Activated CD4-positive, alpha-beta memory T cell treated with anti-CD3 and anti-CD28 coated beads for 36 hours (primary cell): ENCODE measurements at regions of chr2 and their contacts with region 1.

Region 1: DNA sequence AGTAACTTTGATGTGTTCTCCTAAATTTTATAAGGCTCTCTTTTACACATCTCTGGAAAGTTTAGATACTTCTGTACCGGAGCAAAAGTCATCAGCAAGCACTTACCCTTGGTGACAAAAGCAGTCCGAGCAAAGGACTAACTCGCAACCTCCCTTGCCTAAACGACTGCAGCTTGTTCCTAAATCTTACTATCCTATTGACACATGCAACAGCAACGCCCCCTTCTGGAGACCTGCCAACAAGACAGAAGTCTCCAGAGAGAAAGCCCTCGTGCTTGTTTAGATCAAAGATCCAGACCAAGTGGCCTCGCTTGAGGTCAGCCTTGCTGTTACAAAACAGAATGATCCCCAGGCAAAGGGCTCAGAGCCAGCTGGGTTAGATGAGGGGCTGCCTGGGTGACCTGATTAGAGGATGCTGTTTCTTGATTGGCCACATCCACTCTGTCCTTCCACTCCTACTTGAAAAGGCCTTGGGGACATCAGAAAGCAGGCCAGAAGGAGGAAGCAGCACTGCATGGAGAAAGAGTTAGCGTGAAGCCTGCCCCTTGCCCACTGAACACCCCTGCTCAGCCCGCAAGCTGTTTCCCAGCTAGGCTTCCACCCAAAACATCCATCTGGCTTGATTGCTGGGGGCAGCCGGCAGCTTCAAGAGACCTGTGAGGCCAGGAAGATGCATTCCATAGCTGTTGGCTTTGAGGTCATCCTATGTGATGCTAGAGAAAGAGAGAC is 94.3 kb downstream of the HNRNPLL start:
- DNase-seq: peak; percentile 89
- H3K4me3 Mint-ChIP-seq: no peak overlapping the region
- H3K27ac Mint-ChIP-seq: no peak overlapping the region
- H3K4me1 Mint-ChIP-seq: no peaks in the 10 kb centered on the region
- H3K27me3 Mint-ChIP-seq: peaks cover 2% of the 10 kb centered on the region

Region 2: DNA sequence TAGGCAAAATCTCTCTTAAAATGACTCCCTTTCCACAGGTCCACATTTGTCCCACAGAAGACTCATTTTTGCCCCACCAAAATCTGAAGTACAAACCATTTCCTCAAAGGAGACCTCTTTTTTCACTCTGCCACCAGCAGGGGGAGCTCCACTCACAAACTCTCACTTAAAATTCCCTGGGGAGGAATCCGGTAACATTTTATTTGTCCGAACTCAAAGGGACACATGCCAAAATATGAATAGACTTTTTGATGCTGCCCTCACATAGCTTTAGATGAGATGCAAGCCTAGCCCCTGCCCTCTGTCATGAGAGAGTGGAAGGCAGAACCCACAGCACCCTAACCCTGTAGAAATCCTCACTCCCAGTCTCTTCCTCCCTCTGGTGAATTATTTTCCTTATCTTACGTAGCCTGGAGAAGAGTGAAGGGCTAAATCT is 526.3 kb before region 1 on chr2:
- CTCF ChIA-PET with region 1: interaction called, 4 read pairs
- POLR2A ChIA-PET with region 1: no interaction called
- intact Hi-C with region 1: loop called (anchors 5 kb)
- DNase-seq: peak; percentile 68
- H3K4me3 Mint-ChIP-seq: no peak overlapping the region
- H3K27ac Mint-ChIP-seq: no peak overlapping the region
- H3K4me1 Mint-ChIP-seq: no peaks in the 10 kb centered on the region
- H3K27me3 Mint-ChIP-seq: peaks cover 2% of the 10 kb centered on the region

Region 3: GRCh38 chr2:38301340-38301968 is 207.0 kb before region 1 on chr2:
- CTCF ChIA-PET with region 1: interaction called, 13 read pairs
- POLR2A ChIA-PET with region 1: no interaction called
- intact Hi-C with region 1: no loop called
- DNase-seq: peak; percentile 60
- H3K4me3 Mint-ChIP-seq: no peak overlapping the region
- H3K27ac Mint-ChIP-seq: peak overlapping the region; percentile 31
- H3K4me1 Mint-ChIP-seq: peaks cover 29% of the 10 kb centered on the region
- H3K27me3 Mint-ChIP-seq: no peaks in the 10 kb centered on the region

Region 4: DNA sequence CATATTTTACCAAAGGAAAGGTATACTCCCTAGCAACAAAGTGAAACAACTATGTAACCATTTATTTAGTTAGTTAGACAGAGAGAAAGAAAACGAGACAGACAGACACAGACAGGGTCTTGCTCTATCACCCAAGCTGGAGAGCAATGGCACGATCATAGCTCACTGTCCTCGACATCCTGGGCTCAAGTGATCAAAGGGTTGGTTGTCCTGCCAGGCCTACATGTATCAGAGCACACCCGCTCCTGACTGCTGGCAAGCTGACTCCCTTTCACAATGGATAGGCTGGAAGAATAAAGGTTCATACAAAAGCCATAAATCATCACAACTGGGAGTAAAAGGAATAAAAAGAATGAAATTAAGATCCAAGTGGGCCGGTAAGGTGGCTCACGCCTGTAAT is 184.9 kb before region 1 on chr2:
- CTCF ChIA-PET with region 1: interaction called, 247 read pairs
- POLR2A ChIA-PET with region 1: no interaction called
- intact Hi-C with region 1: no loop called
- DNase-seq: no peak
- H3K4me3 Mint-ChIP-seq: no peak overlapping the region
- H3K27ac Mint-ChIP-seq: no peak overlapping the region
- H3K4me1 Mint-ChIP-seq: peaks cover 24% of the 10 kb centered on the region
- H3K27me3 Mint-ChIP-seq: no peaks in the 10 kb centered on the region

Region 5: DNA sequence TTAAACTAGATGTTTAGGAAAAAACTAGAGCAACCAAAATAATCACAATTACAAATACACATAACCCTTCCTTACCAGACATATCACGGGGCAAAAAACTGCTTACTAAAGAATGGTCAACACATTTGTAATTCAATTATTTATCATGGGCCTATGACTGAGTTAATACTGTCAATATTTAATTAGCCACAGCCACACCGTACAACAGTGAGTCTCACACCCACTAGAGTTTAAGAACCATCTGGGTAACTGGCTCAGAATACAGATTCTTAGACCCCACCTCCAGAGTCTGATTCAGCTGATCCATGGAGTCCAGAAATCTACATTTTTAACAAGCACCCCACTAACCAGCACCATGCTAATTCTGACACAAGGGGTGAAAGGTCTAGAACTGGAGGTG is 146.2 kb before region 1 on chr2:
- CTCF ChIA-PET with region 1: interaction called, 13 read pairs
- POLR2A ChIA-PET with region 1: no interaction called
- intact Hi-C with region 1: no loop called
- DNase-seq: no peak
- H3K4me3 Mint-ChIP-seq: no peak overlapping the region
- H3K27ac Mint-ChIP-seq: no peak overlapping the region
- H3K4me1 Mint-ChIP-seq: peaks cover 31% of the 10 kb centered on the region
- H3K27me3 Mint-ChIP-seq: no peaks in the 10 kb centered on the region

Region 6: DNA sequence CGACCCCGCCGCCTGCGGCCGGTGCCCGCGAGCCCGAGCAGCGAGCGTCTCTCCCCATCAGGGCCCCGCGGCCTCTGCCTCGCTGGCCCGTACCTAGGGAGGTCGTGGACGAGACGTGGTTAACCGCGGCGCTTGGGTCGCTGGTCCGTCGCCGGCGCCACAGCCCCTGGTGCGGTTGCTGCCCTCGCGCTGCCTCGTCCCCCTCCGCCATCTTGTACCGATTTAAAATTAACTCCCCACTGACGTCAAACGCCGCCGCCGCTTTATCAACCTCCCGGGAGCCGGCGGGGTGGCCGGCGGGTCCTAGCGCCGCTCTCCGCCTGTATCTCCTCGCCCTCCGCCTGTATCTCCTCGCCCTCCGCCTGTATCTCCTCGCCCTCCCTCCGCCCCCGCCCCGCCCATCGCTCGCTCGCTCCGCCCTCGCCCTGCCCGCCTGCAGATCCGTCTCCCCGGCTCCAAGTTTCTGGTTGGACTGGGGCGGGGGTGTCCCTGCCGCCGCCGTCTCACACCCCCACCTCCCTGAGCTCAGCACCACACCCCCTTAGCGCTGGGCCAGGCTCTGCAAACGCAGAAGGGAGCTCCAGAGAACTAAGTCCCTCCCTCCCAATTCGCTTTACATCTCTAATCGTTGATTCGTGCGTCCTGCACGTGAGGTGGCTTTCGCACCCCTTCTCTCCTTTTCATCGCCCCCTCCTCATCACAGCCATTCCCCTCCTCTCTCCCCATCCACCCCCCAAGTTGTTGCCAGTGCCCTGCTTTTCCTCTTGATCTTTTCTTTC is 131.2 kb before region 1 on chr2 and contains the start of gene ATL2:
- CTCF ChIA-PET with region 1: interaction called, 32 read pairs
- POLR2A ChIA-PET with region 1: no interaction called
- intact Hi-C with region 1: no loop called
- DNase-seq: peak; percentile 97
- H3K4me3 Mint-ChIP-seq: peak within 1 kb of the TSS; percentile 83
- H3K27ac Mint-ChIP-seq: peak within 1 kb of the TSS; percentile 81
- H3K4me1 Mint-ChIP-seq: peaks cover 55% of the 10 kb centered on the region
- H3K27me3 Mint-ChIP-seq: no peaks in the 10 kb centered on the region
- total RNA-seq, gene ATL2: 51.3 to 53.9 TPM

Region 7: DNA sequence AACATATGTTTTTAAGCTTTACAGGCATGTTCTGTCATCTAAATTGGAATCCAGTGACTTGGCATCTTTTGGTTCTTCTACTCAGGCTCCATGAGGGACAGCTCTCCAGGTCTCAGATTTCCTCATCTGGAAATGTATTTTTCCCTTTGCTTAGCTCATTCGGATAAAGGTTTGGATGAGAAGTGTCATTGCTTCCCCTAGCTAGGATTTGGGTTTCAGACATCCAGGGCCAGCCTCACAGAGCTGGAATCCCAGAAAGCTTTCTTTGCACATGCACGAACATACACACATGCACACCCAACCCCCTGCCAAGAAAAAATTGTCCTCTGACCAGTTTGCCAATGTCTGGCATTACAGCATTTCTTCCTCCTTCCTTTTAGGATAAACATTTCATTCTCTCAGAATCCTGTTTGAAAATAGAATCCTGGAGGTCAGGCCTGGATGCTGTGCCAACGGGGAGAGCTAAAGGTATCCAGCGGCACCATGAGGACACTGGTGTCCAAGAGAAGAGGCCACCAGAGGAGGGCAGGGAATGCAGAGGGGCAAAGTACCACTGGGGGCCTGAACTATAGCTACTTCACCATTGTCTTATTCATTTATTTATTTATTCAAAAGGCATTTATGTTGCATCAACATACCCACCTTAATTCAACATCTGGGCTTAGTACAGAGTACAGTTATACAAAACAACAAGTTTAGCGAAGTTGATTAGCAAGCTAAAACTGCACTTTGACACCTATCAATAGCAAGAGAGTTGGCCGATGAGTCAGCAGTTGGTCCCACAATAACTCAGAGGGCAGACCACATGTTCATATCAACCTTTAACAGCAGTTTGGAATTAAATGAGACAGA is 33.5 kb before region 1 on chr2:
- CTCF ChIA-PET with region 1: interaction called, 10 read pairs
- POLR2A ChIA-PET with region 1: no interaction called
- intact Hi-C with region 1: no loop called
- DNase-seq: peak; percentile 73
- H3K4me3 Mint-ChIP-seq: no peak overlapping the region
- H3K27ac Mint-ChIP-seq: no peak overlapping the region
- H3K4me1 Mint-ChIP-seq: peaks cover 31% of the 10 kb centered on the region
- H3K27me3 Mint-ChIP-seq: peaks cover 14% of the 10 kb centered on the region

Region 8: GRCh38 chr2:38600242-38600891 is 91.9 kb after region 1 on chr2:
- CTCF ChIA-PET with region 1: no interaction called
- POLR2A ChIA-PET with region 1: no interaction called
- intact Hi-C with region 1: no loop called
- DNase-seq: peak; percentile 60
- H3K4me3 Mint-ChIP-seq: peak overlapping the region; percentile 92
- H3K27ac Mint-ChIP-seq: peak overlapping the region; percentile 90
- H3K4me1 Mint-ChIP-seq: peaks cover 47% of the 10 kb centered on the region
- H3K27me3 Mint-ChIP-seq: no peaks in the 10 kb centered on the region

Region 9: DNA sequence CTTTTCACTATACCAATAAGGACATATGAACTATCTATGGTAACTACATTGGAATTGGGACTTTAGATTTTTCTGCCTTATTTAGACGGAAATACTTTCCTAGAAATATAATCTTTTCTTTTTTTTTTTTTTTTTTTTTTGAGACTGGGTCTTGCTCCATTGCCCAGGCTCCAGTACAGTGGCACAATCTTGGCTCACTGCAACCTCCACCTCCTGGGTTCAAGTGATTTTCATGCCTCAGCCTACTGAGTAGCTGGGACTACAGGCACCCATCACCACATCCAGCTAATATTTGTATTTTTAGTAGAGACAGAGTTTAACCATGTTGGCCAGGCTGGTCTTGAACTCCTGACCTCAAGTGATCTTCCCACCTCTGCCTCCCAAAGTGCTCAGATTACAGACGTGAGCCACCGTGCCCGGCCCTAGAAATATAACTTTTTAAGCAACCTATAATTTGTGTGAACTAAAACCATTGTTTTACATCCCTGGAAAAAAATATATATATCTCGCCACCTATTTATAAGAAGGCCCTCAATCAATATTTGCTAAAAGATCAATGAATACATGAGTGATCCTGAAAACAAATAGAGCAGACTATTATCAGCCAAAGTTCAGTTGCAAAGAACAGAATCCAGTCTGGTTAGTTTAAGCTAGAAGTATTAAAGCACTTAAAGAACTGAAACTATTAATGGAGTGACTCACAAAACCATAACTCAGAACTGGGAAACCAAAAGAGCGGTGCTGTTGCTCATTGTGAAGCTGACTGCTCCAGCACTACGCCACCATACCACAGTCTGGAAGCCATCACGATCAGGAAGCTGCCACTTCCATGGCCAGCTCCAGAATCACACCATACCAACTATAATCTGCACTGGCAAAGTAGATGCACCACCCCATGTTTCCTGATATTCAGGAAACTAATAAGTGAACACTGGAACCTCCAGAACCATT is 102.7 kb after region 1 on chr2:
- CTCF ChIA-PET with region 1: no interaction called
- POLR2A ChIA-PET with region 1: no interaction called
- intact Hi-C with region 1: no loop called
- DNase-seq: peak; percentile 57
- H3K4me3 Mint-ChIP-seq: peak overlapping the region; percentile 10
- H3K27ac Mint-ChIP-seq: peak overlapping the region; percentile 31
- H3K4me1 Mint-ChIP-seq: peaks cover 69% of the 10 kb centered on the region
- H3K27me3 Mint-ChIP-seq: no peaks in the 10 kb centered on the region